Heart right ventricle (tissue), 16 donors: ENCODE measurements at regions of chr11 and their contacts with region 1.

Region 1: DNA sequence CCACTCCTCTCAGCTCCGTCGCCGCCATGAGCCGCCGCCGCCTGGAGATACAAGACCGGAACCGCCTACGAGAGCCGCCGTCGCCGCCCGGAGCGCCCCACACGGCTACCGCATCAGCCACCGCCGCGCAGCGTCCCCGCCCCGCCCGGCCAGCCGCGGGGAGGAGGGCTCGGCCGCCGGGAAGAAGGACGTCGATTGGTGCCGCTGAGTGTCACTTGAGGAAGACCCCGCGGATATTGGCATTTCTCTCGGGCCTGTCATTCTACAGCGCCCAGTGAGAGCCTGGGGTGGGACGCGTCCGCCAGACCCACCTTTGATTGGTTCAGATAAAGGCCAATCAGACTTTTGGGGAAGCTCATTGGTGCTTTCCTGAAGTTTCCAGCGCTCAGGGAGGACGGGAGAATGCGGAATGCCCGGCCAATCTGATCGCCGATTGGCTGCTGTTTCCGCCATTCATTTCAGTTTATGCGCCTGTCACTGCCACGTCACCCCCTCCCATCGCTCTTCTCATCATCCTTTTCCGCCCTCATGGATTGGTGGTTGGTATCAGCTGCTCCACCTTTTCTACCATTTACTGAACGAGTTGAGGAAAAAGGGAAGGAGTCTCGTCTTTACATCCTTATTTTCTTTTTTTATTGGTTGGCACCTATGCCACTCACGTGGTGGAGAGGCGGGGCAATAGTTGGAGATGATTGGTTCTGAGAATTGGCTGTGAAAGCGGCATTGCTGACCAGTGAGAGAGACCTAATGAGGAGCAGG is at the start of gene OSBP:
- DNase-seq: peak; percentile 97 to 100
- ATAC-seq: peak; percentile 93 to 97 (median 94)
- H3K4me3 ChIP-seq: peak within 1 kb of the TSS; percentile 66 to 93 (median 86)
- H3K27ac ChIP-seq: peak within 1 kb of the TSS; percentile 71 to 97 (median 92)
- H3K4me1 ChIP-seq: peaks cover 0 to 47% (median 42%) of the 10 kb centered on the region in 9 donors
- H3K27me3 ChIP-seq: no peaks in the 10 kb centered on the region
- CTCF ChIP-seq: peak in 2 of 9 donors; percentile 0 to 27
- total RNA-seq, gene OSBP: 30.2 to 46.8 (median 39.3) TPM

Region 2: DNA sequence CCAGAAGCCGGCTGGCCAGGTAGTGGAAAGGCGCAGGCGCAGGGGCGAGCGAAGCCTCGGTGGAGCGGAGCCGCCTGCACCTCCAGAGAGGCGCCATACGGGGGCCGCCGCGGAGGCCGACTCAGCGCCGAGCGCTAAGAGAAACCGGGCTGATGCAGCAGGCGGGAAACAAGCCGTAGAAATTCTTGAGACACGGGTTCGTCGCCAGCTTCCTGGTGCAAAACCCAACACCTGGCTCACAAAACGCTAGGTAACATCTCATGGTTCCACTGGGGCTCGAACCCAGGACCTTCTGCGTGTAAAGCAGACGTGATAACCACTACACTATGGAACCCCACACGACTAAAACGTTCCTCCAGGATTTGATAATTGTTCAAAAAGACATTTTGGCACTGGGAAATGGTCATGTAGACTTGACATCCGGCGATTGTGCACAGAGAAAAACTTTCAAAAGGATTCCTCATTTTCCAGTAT is 65.4 kb before region 1 on chr11:
- intact Hi-C with region 1: loop called in 1 of 10 experiments (anchors 5 kb)
- DNase-seq: peak; percentile 67 to 71
- ATAC-seq: peak; percentile 79 to 93 (median 88)
- H3K4me3 ChIP-seq: peak overlapping the region; percentile 2 to 61 (median 50)
- H3K27ac ChIP-seq: peak overlapping the region; percentile 37 to 85 (median 78)
- H3K4me1 ChIP-seq: peaks cover 0 to 40% (median 9%) of the 10 kb centered on the region in 9 donors
- H3K27me3 ChIP-seq: no peaks in the 10 kb centered on the region
- CTCF ChIP-seq: peak in 7 of 9 donors; percentile 32 to 63 (median 50)

Region 3: DNA sequence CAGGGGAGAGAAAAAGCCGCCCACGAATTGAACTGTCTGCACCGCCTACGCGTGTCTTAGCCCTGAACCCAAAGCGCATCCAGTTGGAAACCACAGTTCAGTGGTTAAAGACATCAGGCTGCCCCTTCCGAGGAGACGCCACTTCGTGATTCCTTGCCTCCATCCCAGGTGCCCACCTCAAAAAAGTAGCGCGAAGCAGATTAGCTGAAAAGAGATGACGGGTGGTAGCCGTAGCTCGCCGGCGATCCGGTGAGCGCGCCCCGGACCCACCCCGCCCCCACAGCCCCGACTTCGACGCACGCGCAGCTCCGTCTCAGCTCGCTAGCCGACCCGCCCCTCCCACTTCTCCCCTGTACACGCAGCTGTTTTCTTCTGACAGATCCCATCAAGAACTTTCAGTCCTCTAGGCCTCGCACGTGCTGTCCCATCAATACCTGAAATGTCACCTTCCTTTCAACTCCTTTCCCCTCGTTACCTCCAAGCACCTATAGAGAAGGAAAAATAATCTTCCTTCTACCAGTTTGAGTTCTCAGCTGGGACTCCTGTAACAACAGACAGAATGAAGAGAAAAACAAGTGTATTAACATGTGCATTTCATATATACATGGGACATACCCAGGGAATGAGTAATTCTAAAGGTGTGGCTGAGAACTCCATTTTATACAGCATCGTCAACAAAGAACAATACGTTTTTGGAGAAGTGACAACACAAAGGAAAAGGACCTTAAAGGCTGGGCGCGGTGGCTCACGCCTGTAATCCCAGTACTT is 54.9 kb before region 1 on chr11:
- intact Hi-C with region 1: loop called in 5 of 10 experiments (anchors 5 to 10 kb)
- DNase-seq: peak; percentile 86 to 87
- ATAC-seq: peak; percentile 86 to 94 (median 91)
- H3K4me3 ChIP-seq: peak overlapping the region; percentile 54 to 91 (median 80)
- H3K27ac ChIP-seq: peak overlapping the region; percentile 64 to 87 (median 78)
- H3K4me1 ChIP-seq: peaks cover 0 to 38% (median 21%) of the 10 kb centered on the region in 9 donors
- H3K27me3 ChIP-seq: no peaks in the 10 kb centered on the region
- CTCF ChIP-seq: no peak

Region 4: GRCh38 chr11:59573234-59573633 is 42.6 kb before region 1 on chr11:
- intact Hi-C with region 1: loop called in 4 of 10 experiments (anchors 5 to 10 kb)
- DNase-seq: no peak
- ATAC-seq: no peak
- H3K4me3 ChIP-seq: no peak overlapping the region
- H3K27ac ChIP-seq: peak overlapping the region in 2 of 10 donors; percentile 22 to 58
- H3K4me1 ChIP-seq: peaks cover 0 to 19% (median 5%) of the 10 kb centered on the region in 9 donors
- H3K27me3 ChIP-seq: no peaks in the 10 kb centered on the region
- CTCF ChIP-seq: no peak